HepG2 (cell line): ENCODE measurements at regions of chr16 and their contacts with region 1.

Region 1: DNA sequence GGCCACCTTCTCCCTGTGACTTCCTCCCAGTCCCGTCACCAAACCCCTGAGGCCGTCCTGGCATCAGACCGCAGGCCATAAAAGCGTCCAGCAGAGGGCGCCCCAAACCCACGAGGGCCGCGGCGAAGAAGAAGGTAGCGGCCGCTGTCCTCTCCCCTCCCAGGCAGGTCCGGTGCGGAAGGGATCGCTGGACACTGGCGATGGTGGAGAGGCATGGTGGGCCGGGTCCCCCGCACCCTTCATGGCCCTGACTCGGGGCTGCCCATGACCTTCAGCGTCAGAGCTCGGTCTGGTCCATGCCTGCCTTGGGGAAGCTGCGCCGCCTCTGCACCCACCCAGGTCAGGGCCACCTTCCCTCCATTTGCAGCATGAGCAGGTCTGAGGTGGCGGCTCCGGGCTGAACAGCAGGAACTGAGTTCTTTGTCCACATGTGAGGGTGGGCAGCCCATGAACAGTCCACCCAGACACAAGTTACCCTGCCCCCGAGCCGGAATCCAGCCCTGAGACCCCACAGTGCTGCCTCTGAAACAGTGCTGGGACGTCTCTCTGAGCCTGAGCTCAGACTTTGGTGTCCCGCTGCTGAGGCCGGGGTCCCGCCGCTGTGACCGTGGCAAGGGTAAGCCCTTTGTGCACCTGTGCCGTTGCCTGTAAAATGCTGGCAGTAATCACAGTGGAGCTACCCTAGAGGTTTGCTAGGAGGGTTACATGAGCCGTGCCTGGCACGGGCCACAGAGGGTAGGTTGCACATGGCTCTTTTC is 40.8 kb upstream of the CMIP start:
- DNase-seq: peak; percentile 79
- ATAC-seq: peak; percentile 90
- H3K4me3 ChIP-seq: peak overlapping the region; percentile 57 to 82 (median 71); a peak in 5 of 6 replicates
- H3K27ac ChIP-seq: no peak overlapping the region
- H3K4me1 ChIP-seq: peaks cover 33% of the 10 kb centered on the region
- H3K27me3 ChIP-seq: peaks cover 2% of the 10 kb centered on the region in 2 experiments; a peak in 1 of 5 replicates
- CTCF ChIP-seq: peak; percentile 100
- EP300 ChIP-seq: no peak
- POLR2A ChIP-seq: peak in 1 of 2 experiments; percentile 28; a peak in 1 of 4 replicates
- RAD21 ChIP-seq: peak; percentile 99

Region 2: GRCh38 chr16:81429045-81429521 is 25.3 kb after region 1 on chr16:
- CTCF ChIA-PET with region 1: no interaction called
- POLR2A ChIA-PET with region 1: interaction called, 3 read pairs
- in situ Hi-C with region 1: no loop called
- intact Hi-C with region 1: loop called (anchors 2 kb)
- DNase-seq: peak; percentile 76
- ATAC-seq: peak; percentile 77
- H3K4me3 ChIP-seq: peak overlapping the region in 1 of 3 experiments; percentile 51; a peak in 2 of 6 replicates
- H3K27ac ChIP-seq: no peak overlapping the region
- H3K4me1 ChIP-seq: peaks cover 56% of the 10 kb centered on the region
- H3K27me3 ChIP-seq: no peaks in the 10 kb centered on the region
- CTCF ChIP-seq: peak; percentile 72
- EP300 ChIP-seq: no peak
- POLR2A ChIP-seq: no peak
- RAD21 ChIP-seq: peak; percentile 81

Region 3: DNA sequence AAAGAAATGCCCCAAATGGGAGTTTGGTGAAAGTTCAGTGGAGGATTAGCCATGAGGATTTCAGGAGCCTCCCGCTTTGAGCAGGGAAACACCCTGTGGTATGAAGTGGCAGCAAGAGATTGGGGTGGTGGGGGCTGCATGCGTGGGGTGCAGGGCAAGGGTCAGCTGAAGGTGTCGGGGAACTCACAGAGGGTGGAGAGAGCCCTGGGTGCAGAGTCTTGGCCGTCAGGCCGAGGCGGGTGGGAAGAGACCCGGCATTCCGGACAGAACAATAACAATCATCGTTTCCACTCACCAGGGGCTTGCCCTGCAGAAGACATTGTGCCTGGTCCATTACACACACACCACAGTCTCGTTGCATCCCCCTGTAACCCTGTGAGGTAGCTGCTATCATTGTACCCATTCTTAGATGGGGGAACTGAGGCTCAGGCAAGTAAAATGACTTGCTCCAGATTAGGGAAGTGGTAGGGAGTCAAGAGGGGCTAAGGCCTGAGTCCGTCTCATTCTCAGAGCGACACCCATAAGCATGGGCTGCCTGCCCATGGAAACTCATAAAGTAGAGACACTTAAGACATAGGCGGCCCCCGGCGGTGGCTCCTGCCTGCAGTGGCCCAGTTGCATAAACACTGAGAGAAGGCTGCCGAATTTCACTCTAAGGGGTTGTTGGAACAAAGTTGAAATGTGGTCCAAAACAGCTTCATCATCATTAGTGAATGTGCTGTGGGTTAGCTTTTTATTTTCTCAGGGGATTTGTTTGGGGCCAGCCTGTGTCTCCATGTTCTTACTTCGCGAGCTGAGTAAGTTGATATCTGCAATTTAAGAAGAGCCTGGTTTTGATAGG is 134.1 kb after region 1 on chr16:
- CTCF ChIA-PET with region 1: no interaction called
- POLR2A ChIA-PET with region 1: no interaction called
- in situ Hi-C with region 1: no loop called
- intact Hi-C with region 1: loop called (anchors 5 kb)
- DNase-seq: no peak
- ATAC-seq: no peak
- H3K4me3 ChIP-seq: no peak overlapping the region
- H3K27ac ChIP-seq: no peak overlapping the region
- H3K4me1 ChIP-seq: peaks cover 100% of the 10 kb centered on the region
- H3K27me3 ChIP-seq: no peaks in the 10 kb centered on the region
- CTCF ChIP-seq: no peak
- EP300 ChIP-seq: no peak
- POLR2A ChIP-seq: no peak
- RAD21 ChIP-seq: no peak

Region 4: GRCh38 chr16:81696961-81697615 is 293.3 kb after region 1 on chr16:
- CTCF ChIA-PET with region 1: interaction called, 5 read pairs
- POLR2A ChIA-PET with region 1: no interaction called
- in situ Hi-C with region 1: no loop called
- intact Hi-C with region 1: loop called (anchors 1 kb)
- DNase-seq: peak; percentile 45
- ATAC-seq: peak; percentile 68
- H3K4me3 ChIP-seq: no peak overlapping the region
- H3K27ac ChIP-seq: no peak overlapping the region
- H3K4me1 ChIP-seq: no peaks in the 10 kb centered on the region
- H3K27me3 ChIP-seq: no peaks in the 10 kb centered on the region
- CTCF ChIP-seq: peak; percentile 90
- EP300 ChIP-seq: no peak
- POLR2A ChIP-seq: no peak
- RAD21 ChIP-seq: peak; percentile 72

Region 5: DNA sequence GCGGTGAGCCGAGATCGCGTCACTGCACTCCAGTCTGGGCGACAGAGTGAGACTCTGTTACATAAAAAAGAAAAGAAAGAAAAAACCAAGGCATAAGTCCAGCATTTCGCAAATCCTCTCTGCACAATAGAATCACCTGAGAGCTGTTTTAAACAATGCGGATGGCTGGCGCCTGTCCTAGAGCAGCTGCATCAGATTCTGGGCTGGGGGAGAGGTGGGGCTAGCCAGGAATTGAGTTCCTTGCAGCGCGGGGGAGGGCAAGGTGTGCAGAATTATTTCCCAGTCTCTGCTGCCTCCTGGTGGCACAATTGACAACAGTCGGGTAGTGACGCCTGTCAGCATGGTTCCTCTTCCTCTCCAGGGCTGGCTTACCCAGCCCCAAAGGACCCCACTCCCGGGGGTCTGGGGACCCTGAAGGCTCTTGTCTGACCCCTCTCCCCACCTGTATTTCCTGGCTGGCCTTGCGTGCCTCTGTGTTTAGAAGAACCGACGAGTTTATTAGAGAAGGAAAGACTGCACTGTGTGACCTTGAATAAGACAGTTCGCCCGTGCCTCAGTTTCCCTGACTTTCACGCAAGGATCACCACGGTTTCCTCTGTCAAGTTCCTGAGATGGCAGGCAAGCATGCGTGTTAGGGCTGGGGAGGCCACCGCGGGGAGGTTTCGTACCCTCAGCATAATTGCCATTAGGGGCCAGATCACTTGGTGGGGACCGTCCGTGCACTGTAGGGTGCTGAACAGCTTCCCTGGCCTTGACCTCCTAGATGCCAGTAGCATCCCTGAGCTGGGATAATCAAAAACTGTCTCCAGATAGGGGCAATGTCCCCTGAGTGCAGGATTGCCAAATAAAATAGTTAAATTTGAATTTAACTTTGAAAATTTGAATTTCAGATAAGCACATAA is 334.3 kb after region 1 on chr16:
- CTCF ChIA-PET with region 1: interaction called, 8 read pairs
- POLR2A ChIA-PET with region 1: no interaction called
- in situ Hi-C with region 1: no loop called
- intact Hi-C with region 1: loop called (anchors 1 kb)
- DNase-seq: peak; percentile 74
- ATAC-seq: peak; percentile 92
- H3K4me3 ChIP-seq: peak overlapping the region in 2 of 3 experiments; percentile 3 to 60; a peak in 4 of 6 replicates
- H3K27ac ChIP-seq: no peak overlapping the region
- H3K4me1 ChIP-seq: peaks cover 16% of the 10 kb centered on the region
- H3K27me3 ChIP-seq: peaks cover 0 to 31% of the 10 kb centered on the region in 2 experiments; a peak in 4 of 5 replicates
- CTCF ChIP-seq: peak; percentile 94
- EP300 ChIP-seq: no peak
- POLR2A ChIP-seq: no peak
- RAD21 ChIP-seq: peak; percentile 89